ENCODE measurements at regions of chr12 and their contacts with region 1.

Region 1: DNA sequence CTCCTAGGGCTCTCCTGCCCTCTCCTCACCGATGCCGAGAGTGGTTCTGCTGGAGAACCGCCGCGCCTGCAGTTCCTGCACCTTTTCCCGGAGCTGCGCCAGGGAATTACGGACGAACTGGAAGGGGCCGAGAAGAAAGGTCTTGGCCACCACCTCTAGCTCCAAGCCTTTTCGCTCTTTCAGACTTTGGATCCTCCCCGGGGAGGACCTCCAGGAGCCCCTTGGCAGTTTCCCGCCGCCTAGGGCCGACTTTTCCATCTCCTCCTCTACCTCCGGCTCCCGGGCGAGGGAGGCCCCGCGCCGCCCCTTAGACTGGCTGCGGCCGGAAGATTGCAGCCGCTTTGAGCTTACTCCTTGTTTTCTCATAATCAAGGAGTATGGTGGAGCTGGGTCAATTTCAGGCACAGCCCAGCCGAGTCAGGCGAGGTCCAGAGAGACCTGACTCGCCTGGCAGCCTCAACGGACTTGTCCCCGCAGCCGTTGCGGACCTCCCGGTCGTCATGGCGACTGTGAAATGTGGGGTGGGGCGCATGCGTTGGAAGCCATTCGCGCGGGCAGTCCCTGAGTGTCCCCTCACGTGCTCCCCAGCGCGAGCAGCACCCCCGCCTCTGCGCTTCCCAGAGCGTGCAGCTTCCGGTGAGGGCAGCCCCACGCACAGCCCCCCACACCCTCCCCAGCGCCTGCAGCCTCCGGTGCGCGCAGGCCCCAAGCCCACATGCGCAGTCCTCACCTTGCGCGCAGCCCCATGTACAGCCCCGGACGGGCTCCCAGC is at the start of gene DPY19L2:
- DNase-seq: peak; percentile 71
- H3K4me3 ChIP-seq: peak within 1 kb of the TSS; percentile 57
- H3K27ac ChIP-seq: no peak within 1 kb of the TSS
- H3K4me1 ChIP-seq: no peaks in the 10 kb centered on the region
- H3K27me3 ChIP-seq: peaks cover 17% of the 10 kb centered on the region
- CTCF ChIP-seq: no peak
- total RNA-seq, gene DPY19L2: 4.2 and 7.5 TPM in 2 replicates

Region 2: DNA sequence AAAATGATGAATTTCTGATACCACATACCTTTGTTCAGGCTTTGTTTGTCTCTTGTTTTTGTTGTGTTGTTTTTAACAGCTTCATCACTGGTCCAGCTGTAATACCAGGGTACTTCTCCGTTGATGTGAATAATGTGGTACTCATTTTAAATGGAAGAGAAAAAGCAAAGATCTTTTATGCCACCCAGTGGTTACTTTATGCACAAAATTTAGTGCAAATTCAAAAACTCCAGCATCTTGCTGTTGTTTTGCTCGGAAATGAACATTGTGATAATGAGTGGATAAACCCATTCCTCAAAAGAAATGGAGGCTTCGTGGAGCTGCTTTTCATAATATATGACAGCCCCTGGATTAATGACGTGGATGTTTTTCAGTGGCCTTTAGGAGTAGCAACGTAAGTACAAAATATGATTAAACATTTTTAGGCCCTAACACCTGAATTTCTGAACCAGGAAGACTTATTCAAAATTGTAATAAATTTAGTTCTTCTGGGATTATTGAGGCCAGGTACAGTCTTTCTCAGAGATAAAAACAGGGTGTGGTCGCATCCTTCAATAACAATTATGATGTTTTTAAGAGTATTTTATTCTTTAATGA is 133.9 kb after region 1 on chr12:
- CTCF ChIA-PET with region 1: no interaction called
- POLR2A ChIA-PET with region 1: no interaction called
- intact Hi-C with region 1: loop called (anchors 2 kb)
- DNase-seq: peak; percentile 55
- H3K4me3 ChIP-seq: no peak overlapping the region
- H3K27ac ChIP-seq: no peak overlapping the region
- H3K4me1 ChIP-seq: no peaks in the 10 kb centered on the region
- H3K27me3 ChIP-seq: no peaks in the 10 kb centered on the region
- CTCF ChIP-seq: peak; percentile 65

Region 3: GRCh38 chr12:63955831-63956609 is 287.8 kb after region 1 on chr12:
- CTCF ChIA-PET with region 1: no interaction called
- POLR2A ChIA-PET with region 1: no interaction called
- intact Hi-C with region 1: no loop called
- DNase-seq: no peak
- H3K4me3 ChIP-seq: no peak overlapping the region
- H3K27ac ChIP-seq: no peak overlapping the region
- H3K4me1 ChIP-seq: peaks cover 19% of the 10 kb centered on the region
- H3K27me3 ChIP-seq: no peaks in the 10 kb centered on the region
- CTCF ChIP-seq: no peak

Region 4: DNA sequence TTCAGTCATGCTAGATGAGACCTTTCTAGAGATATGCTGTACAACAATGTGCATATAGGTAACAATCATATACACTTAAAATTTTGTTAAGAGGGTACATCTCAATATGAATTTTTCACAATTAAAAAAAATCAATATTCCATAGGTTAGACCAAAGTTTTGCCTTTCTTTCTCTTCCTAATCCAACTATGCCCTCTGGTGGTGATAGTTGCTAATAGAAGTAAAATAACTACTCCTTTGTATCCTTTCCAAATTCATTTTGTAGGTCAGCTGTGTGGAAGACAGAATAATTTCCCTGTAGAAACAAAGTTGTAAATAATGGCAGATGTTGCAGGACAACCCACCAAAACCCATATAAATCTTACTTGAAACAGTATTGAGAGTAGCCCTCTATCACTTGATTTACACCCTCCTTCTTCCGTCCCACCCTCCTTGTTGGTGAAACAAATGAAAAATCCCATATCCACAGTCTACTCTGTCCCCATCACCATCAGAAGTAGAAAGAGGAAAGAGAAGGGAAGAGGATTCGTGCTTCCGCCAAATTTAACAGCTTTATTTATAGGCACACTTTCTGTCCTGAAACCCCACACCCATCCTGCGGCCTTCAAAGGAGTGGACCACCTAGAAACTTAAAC is 588.1 kb after region 1 on chr12:
- CTCF ChIA-PET with region 1: no interaction called
- POLR2A ChIA-PET with region 1: no interaction called
- intact Hi-C with region 1: loop called (anchors 10 kb)
- DNase-seq: peak; percentile 79
- H3K4me3 ChIP-seq: no peak overlapping the region
- H3K27ac ChIP-seq: no peak overlapping the region
- H3K4me1 ChIP-seq: no peaks in the 10 kb centered on the region
- H3K27me3 ChIP-seq: no peaks in the 10 kb centered on the region
- CTCF ChIP-seq: peak; percentile 71

Measured in A673 (cell line).